HCT116 (cell line): ENCODE measurements at regions of chr6 and their contacts with region 1.

Region 1: DNA sequence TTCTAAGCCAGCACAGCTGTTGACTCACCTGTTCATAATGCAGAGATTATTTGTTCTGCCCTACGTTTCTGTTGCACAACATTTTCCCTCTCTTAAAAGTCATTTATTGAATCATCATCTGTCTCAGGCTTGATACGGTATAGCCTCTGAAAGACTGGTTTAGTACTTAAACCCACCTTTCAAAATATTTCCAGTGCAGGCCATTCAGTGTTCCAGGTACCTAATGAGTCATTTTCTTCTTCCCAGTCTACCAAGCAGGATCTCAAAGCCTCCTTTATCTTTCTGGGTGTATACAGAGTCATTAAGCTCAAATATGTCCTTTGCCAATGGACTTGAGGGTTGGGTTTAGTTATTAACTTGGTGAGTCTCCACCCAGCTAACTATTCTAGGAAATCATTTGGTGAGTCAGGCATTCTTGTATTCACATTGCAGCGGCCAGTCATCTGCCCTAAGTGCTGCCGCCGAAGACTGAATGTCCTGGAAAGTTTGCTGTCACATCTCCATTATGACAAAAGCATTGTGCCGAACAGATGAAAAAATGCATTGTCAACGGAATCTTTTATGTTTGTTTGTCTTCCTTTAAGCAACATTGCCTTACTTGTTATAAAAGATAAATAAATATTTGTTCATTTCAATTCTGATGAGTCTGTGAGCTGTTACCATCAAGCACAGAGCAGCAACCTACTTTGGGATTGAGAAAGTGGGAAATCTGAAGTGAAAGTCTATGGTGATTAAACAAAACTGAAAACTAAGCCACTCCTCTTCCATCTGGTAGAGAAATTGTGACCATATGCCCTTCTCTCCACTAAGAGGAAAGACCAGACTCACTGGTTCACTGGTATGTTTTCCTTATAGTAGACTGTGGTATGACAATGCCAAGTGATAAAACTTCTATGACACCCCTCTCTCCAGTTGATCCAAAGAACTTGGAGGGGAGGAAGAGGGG is 14.3 kb upstream of the FAM135A start:
- DNase-seq: peak; percentile 97
- ATAC-seq: peak; percentile 92
- H3K4me3 ChIP-seq: peak overlapping the region; percentile 20 to 40
- H3K27ac ChIP-seq: peak overlapping the region; percentile 66
- H3K4me1 ChIP-seq: peaks cover 33 to 56% of the 10 kb centered on the region in 2 experiments
- H3K27me3 ChIP-seq: no peaks in the 10 kb centered on the region
- CTCF ChIP-seq: no peak
- POLR2A ChIP-seq: no peak
- RAD21 ChIP-seq: peak; percentile 23; the same call in 1 of the 2 replicates

Region 2: DNA sequence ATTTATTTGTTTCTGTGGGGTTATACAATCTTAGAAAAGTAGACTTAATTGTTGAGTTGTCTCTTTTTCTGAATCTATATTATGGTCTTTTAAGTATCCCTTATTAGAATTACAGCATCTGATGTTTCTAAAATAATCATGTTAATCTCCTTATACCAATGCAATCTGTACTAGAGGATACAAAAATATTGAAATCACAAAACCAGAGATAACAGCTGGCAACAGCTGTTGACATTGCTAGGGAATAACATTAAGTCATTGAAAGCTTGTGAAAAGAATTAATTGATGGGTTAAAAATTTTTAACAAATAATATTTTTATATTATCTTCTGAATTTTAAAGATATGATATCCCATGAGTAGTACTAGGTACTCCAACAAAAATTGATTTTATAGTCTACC is 370.1 kb before region 1 on chr6:
- CTCF ChIA-PET with region 1: no interaction called
- POLR2A ChIA-PET with region 1: no interaction called
- RAD21 ChIA-PET with region 1: no interaction called
- intact Hi-C with region 1: no loop called
- DNase-seq: no peak
- ATAC-seq: no peak
- H3K4me3 ChIP-seq: no peak overlapping the region
- H3K27ac ChIP-seq: no peak overlapping the region
- H3K4me1 ChIP-seq: no peaks in the 10 kb centered on the region
- H3K27me3 ChIP-seq: no peaks in the 10 kb centered on the region; the same call in 1 of the 2 replicates
- CTCF ChIP-seq: no peak
- POLR2A ChIP-seq: no peak
- RAD21 ChIP-seq: no peak

Region 3: DNA sequence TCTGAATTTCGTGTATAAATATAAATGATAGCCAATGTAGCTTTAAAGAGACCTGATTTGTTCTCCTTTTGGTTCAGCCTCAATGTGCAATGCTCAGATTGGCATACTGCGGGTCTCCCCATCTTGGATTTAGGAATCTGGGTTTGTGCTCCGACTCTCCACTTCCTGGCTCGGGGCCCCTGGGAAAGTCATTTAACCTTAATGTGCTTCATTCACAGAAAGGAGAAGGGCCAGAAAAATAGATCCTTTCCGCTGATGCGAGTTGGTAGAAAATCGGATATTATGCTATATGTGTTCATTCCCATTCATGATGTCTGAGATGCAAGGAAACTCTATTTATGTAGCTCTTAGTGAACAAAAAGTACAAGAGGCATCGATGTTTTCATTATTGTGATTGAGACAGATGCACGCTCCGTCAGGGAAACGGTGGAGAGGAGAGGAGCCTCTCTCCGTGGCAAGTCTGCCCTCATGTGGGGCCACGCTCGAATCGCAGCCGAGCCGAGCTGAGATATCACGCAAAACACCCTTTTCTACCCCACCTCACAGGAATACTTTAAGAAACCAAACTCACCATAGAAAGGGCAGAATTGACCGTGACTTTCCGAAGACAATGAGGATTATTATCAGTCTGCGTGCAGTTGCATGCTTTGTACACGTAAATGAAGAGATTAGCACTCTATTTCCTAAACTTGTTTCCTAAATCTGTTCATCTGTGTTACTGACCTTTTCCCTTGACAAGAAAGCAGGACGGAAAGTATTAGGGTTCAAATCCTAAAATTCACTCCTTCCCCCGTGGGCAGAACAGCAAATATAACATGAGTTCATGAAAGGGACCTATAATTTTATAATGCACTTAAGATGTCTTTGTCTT is 232.7 kb before region 1 on chr6:
- CTCF ChIA-PET with region 1: no interaction called
- POLR2A ChIA-PET with region 1: no interaction called
- RAD21 ChIA-PET with region 1: no interaction called
- intact Hi-C with region 1: no loop called
- DNase-seq: peak; percentile 16
- ATAC-seq: peak; percentile 98
- H3K4me3 ChIP-seq: no peak overlapping the region
- H3K27ac ChIP-seq: no peak overlapping the region
- H3K4me1 ChIP-seq: no peaks in the 10 kb centered on the region
- H3K27me3 ChIP-seq: peaks cover 27% of the 10 kb centered on the region
- CTCF ChIP-seq: peak; percentile 26 to 75 (median 71); a peak in 5 of 6 replicates
- POLR2A ChIP-seq: no peak
- RAD21 ChIP-seq: peak; percentile 65

Region 4: GRCh38 chr6:70369332-70369950 is 29.6 kb before region 1 on chr6:
- CTCF ChIA-PET with region 1: interaction called, 14 read pairs
- POLR2A ChIA-PET with region 1: no interaction called
- RAD21 ChIA-PET with region 1: no interaction called
- intact Hi-C with region 1: no loop called
- DNase-seq: peak; percentile 54
- ATAC-seq: peak; percentile 92
- H3K4me3 ChIP-seq: no peak overlapping the region
- H3K27ac ChIP-seq: no peak overlapping the region
- H3K4me1 ChIP-seq: peaks cover 0 to 2% of the 10 kb centered on the region in 2 experiments; a peak in 2 of 4 replicates
- H3K27me3 ChIP-seq: peaks cover 53% of the 10 kb centered on the region
- CTCF ChIP-seq: peak; percentile 77 to 93 (median 90); a peak in 5 of 6 replicates
- POLR2A ChIP-seq: no peak
- RAD21 ChIP-seq: peak; percentile 75

Region 5: GRCh38 chr6:70413114-70413991 is 14.3 kb after region 1 on chr6 and contains the start of gene FAM135A:
- CTCF ChIA-PET with region 1: interaction called, 4 read pairs
- POLR2A ChIA-PET with region 1: interaction called, 23 read pairs
- RAD21 ChIA-PET with region 1: interaction called in 1 of 2 experiments, 3 read pairs
- intact Hi-C with region 1: loop called (anchors 1 kb)
- DNase-seq: peak; percentile 98
- ATAC-seq: peak; percentile 96
- H3K4me3 ChIP-seq: peak within 1 kb of the TSS; percentile 87 to 95
- H3K27ac ChIP-seq: peak within 1 kb of the TSS; percentile 67
- H3K4me1 ChIP-seq: peaks cover 7 to 21% of the 10 kb centered on the region in 2 experiments; a peak in 3 of 4 replicates
- H3K27me3 ChIP-seq: no peaks in the 10 kb centered on the region
- CTCF ChIP-seq: no peak
- POLR2A ChIP-seq: peak; percentile 94
- RAD21 ChIP-seq: no peak
- total RNA-seq, gene FAM135A: 20.8 TPM

Region 6: GRCh38 chr6:70667711-70668498 is 268.8 kb after region 1 on chr6 and contains the start of gene SMAP1:
- CTCF ChIA-PET with region 1: no interaction called
- POLR2A ChIA-PET with region 1: no interaction called
- RAD21 ChIA-PET with region 1: no interaction called
- intact Hi-C with region 1: loop called (anchors 2 kb)
- DNase-seq: peak; percentile 79
- ATAC-seq: peak; percentile 93
- H3K4me3 ChIP-seq: peak within 1 kb of the TSS; percentile 67 to 73
- H3K27ac ChIP-seq: peak within 1 kb of the TSS; percentile 93
- H3K4me1 ChIP-seq: peaks cover 5 to 23% of the 10 kb centered on the region in 2 experiments; a peak in 2 of 4 replicates
- H3K27me3 ChIP-seq: no peaks in the 10 kb centered on the region
- CTCF ChIP-seq: no peak
- POLR2A ChIP-seq: no peak
- RAD21 ChIP-seq: no peak
- total RNA-seq, gene SMAP1: 3.5 TPM